Heart left ventricle (tissue), 16 donors: ENCODE measurements at regions of chr7 and their contacts with region 1.

Region 1: DNA sequence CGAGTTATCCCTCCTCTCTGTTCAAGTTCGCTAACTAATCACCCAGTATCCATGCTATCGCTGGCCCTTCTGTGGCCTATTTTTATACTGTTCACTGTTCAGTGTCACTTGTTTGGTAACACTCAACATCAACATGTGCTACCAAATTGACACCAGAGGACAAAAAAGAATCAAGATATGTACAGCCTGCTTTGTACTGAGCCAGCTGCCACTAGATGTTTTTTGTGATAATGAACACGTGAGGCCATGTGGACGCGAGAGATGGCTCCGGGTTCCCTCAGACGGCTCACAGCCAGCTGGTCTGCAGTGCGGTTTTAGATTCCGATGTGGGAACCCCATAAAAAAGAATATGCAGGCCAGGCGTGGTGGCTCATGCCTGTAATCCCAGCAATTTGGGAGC is 21.2 kb downstream of the CAV1 start:
- DNase-seq: peak in 1 of 5 donors; percentile 42
- ATAC-seq: peak; percentile 87 to 92 (median 89)
- H3K4me3 ChIP-seq: no peak overlapping the region
- H3K27ac ChIP-seq: peak overlapping the region; percentile 27 to 77 (median 68)
- H3K4me1 ChIP-seq: peaks cover 7 to 98% (median 81%) of the 10 kb centered on the region in 12 donors
- H3K27me3 ChIP-seq: no peaks in the 10 kb centered on the region
- CTCF ChIP-seq: no peak
- POLR2A ChIP-seq: no peak

Region 2: DNA sequence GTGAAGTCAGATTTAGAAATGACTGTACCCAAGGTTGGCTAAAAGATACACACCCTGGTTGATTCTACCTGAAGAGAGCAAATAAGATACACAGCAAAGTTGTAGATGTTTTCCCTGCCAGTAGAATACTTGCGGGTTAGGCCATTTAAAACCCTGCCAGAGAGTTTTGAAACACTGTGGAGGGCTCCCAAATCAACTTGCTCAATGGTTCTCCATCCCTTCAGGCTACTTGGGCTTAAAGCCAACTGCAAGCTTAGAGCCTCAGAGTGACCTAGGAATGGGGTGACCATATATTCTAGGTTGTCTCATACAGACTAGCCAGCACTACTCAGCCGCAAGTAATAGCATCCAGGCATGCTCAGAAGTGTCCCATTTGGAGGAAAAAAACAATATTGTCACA is 11.3 kb before region 1 on chr7:
- intact Hi-C with region 1: loop called in 1 of 10 experiments (anchors 1 kb)
- DNase-seq: no peak
- ATAC-seq: peak in 1 of 4 donors; percentile 42
- H3K4me3 ChIP-seq: peak overlapping the region in 4 of 12 donors; percentile 1 to 24 (median 8)
- H3K27ac ChIP-seq: peak overlapping the region in 11 of 12 donors; percentile 6 to 63 (median 33)
- H3K4me1 ChIP-seq: peaks cover 25 to 94% (median 64%) of the 10 kb centered on the region in 12 donors
- H3K27me3 ChIP-seq: no peaks in the 10 kb centered on the region
- CTCF ChIP-seq: no peak
- POLR2A ChIP-seq: no peak

Region 3: DNA sequence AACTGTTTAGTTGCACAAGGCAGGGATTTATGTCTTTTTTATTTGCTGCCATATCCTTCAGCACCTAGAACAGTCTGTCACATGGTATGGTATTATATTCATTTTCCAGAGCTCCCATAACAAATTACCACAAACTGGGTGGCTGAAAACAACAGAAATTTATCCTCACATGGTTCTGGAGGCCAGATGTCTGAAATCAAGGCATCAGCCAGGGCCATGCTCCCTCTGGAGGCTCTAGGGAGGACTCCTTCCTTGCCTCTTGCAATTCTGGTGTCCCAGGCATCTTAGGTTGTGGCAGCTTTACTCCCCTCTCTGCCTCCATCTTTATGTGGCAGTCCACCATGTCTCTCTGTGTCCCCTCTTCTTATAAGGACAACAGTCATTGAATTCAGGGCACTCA is 169.0 kb after region 1 on chr7:
- intact Hi-C with region 1: no loop called
- DNase-seq: no peak
- ATAC-seq: no peak
- H3K4me3 ChIP-seq: no peak overlapping the region
- H3K27ac ChIP-seq: no peak overlapping the region
- H3K4me1 ChIP-seq: peaks cover 0 to 9% (median 0%) of the 10 kb centered on the region in 12 donors
- H3K27me3 ChIP-seq: no peaks in the 10 kb centered on the region
- CTCF ChIP-seq: no peak
- POLR2A ChIP-seq: no peak